B cell (primary cell): ENCODE measurements at regions of chr17 and their contacts with region 1.

Region 1: DNA sequence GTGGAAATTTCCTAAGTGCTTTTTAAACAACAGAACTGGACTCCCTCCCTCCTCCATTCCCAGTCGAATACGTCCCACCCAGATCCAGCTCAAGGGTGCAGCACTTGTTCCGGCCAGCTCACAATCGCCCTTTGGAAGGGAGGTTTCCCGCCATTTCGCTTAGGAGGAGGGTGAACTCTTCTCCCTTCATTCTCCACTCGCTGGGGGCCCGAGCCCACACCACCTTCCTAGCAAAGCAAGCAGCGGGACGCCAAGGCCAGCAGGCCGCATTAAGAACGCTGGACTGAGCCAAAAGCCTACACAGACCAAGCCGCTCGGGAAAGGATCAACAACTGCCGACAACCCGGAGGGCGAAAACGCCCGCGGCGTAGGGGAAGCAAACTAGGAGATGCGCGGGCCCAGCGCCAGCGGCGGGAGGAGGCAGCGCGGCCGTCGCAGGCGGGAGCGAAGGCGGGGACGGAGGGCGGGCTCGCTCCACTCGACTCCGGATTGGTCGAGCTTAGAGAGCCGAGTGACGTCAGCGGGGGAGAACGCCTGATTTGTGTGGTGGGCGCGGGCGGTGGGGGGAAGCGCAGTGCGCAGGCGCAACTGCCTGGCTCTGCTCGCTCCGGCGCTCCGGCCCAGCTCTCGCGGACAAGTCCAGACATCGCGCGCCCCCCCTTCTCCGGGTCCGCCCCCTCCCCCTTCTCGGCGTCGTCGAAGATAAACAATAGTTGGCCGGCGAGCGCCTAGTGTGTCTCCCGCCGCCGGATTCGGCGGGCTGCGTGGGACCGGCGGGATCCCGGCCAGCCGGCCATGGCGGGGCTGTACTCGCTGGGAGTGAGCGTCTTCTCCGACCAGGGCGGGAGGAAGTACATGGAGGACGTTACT is at the start of gene PPM1D:
- DNase-seq: peak; percentile 99
- ATAC-seq: peak; percentile 93
- H3K4me3 ChIP-seq: peak within 1 kb of the TSS; percentile 82 to 98 (median 92)
- H3K4me3 Mint-ChIP-seq: peak within 1 kb of the TSS; percentile 91
- H3K27ac ChIP-seq: peak within 1 kb of the TSS; percentile 92 to 94
- H3K27ac Mint-ChIP-seq: peak within 1 kb of the TSS; percentile 92
- H3K4me1 ChIP-seq: peaks cover 24 to 28% of the 10 kb centered on the region in 2 donors
- H3K4me1 Mint-ChIP-seq: peaks cover 44% of the 10 kb centered on the region
- H3K27me3 ChIP-seq: no peaks in the 10 kb centered on the region
- H3K27me3 Mint-ChIP-seq: no peaks in the 10 kb centered on the region
- CTCF ChIP-seq: no peak
- total RNA-seq, gene PPM1D: 27.2 and 28.6 TPM in 2 replicates

Region 2: GRCh38 chr17:58777396-58777795 is 1822.5 kb before region 1 on chr17:
- CTCF ChIA-PET with region 1: no interaction called
- POLR2A ChIA-PET with region 1: interaction called, 14 read pairs
- intact Hi-C with region 1: no loop called
- DNase-seq: no peak
- ATAC-seq: no peak
- H3K4me3 ChIP-seq: no peak overlapping the region
- H3K4me3 Mint-ChIP-seq: no peak overlapping the region
- H3K27ac ChIP-seq: no peak overlapping the region
- H3K27ac Mint-ChIP-seq: no peak overlapping the region
- H3K4me1 ChIP-seq: no peaks in the 10 kb centered on the region
- H3K4me1 Mint-ChIP-seq: no peaks in the 10 kb centered on the region
- H3K27me3 ChIP-seq: no peaks in the 10 kb centered on the region
- H3K27me3 Mint-ChIP-seq: no peaks in the 10 kb centered on the region
- CTCF ChIP-seq: no peak

Region 3: DNA sequence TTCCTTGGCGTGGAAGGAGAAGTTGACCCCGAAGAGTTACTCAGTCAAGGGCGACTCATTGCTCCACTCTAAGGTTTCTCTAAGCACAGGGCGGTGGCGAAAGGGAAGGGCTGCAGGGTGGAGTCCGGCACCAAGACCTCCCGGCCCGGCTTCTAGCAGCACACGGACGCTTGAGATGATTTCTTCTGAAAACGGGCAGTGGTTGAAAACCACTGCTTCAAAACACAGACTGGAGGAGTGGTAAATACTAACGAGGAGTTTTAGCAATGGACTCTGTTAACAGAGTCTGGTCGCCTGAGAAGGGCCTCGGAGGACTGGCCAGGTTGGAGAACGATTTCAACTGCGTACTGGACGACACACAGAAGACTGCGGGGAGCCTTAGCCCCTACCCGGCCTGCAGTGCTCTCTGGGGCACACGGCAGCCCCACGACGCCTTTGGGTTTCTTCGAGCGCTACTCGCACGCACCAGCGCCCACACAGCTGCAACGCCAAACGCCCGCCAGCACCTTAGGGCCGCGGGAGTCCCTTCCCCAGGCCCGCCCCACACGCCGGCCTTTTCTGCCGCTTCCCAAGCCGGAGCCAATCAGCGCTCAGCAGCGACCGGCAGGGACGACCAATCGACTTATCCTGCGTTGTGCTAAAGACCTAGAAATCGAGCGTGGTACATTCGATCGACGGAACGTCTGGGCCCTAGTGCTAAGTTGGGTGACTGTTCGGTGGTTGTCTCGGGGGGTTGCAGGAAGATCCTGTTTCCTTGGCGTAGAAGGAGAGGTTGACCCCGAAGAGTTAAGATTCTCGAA is 464.5 kb before region 1 on chr17:
- CTCF ChIA-PET with region 1: no interaction called
- POLR2A ChIA-PET with region 1: no interaction called
- intact Hi-C with region 1: loop called (anchors 10 kb)
- DNase-seq: peak; percentile 85
- ATAC-seq: peak; percentile 90
- H3K4me3 ChIP-seq: peak overlapping the region; percentile 59 to 85 (median 72)
- H3K4me3 Mint-ChIP-seq: peak overlapping the region; percentile 92
- H3K27ac ChIP-seq: no peak overlapping the region
- H3K27ac Mint-ChIP-seq: peak overlapping the region; percentile 85
- H3K4me1 ChIP-seq: peaks cover 28 to 36% of the 10 kb centered on the region in 2 donors
- H3K4me1 Mint-ChIP-seq: peaks cover 31% of the 10 kb centered on the region
- H3K27me3 ChIP-seq: peaks cover 0 to 25% (median 14%) of the 10 kb centered on the region in 4 experiments
- H3K27me3 Mint-ChIP-seq: peaks cover 6% of the 10 kb centered on the region
- CTCF ChIP-seq: no peak

Region 4: DNA sequence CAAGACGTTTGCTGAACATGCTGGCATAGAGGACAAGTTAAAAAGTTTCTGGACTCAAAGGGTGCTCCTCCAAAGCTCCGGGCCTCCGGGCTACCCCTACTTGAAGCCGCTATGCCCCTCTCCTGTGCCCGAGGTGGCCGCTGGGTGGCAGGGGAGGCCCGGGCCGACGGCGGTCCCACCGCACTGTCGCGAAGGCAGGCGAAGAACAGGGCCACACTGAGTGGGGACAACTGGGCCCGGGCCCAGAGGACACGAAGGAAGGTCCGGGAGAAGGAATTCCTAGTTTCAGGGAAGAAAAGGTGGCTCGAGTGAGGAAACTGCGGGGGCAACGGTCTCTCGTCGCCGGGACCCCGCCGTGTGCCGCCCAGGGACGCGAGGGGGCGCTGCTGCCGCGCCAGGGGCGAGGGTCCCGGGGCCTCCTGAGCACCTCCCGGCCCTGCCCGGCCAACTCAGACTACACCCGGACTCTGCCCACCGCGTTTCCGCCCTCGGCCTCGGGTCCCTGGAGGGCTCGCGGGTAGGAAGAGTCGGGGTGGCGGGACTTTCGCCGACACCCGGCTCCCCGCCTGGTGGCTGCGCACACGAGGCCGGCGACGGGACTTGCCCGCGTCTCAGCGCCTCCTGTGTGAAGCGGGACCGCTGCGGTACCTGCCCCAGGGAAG is 178.5 kb before region 1 on chr17:
- CTCF ChIA-PET with region 1: interaction called, 3 read pairs
- POLR2A ChIA-PET with region 1: no interaction called
- intact Hi-C with region 1: loop called (anchors 2 kb)
- DNase-seq: peak; percentile 88
- ATAC-seq: peak; percentile 90
- H3K4me3 ChIP-seq: peak overlapping the region; percentile 44 to 71 (median 56)
- H3K4me3 Mint-ChIP-seq: peak overlapping the region; percentile 87
- H3K27ac ChIP-seq: peak overlapping the region; percentile 61 to 76
- H3K27ac Mint-ChIP-seq: peak overlapping the region; percentile 87
- H3K4me1 ChIP-seq: peaks cover 8 to 15% of the 10 kb centered on the region in 2 donors
- H3K4me1 Mint-ChIP-seq: peaks cover 12% of the 10 kb centered on the region
- H3K27me3 ChIP-seq: no peaks in the 10 kb centered on the region
- H3K27me3 Mint-ChIP-seq: no peaks in the 10 kb centered on the region
- CTCF ChIP-seq: peak; percentile 100

Region 5: DNA sequence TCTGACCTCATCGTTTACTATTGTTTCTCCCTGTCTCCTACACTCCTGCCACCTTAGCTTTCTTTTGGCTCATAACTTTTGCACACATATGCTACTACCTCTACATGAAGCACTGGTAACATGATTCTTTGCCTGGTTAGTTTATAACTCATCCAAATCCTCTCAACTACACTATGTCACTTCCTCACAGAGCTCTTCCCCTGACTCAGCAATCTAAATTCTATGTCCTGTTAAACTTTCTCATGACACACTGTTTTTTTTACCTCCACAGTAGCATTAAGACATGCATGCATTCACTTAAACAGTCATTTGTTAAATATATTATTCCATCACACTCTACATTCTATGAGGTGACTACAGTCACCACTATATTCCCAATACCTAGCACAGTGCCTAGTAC is 93.5 kb before region 1 on chr17:
- CTCF ChIA-PET with region 1: no interaction called
- POLR2A ChIA-PET with region 1: no interaction called
- intact Hi-C with region 1: no loop called
- DNase-seq: no peak
- ATAC-seq: no peak
- H3K4me3 ChIP-seq: no peak overlapping the region
- H3K4me3 Mint-ChIP-seq: no peak overlapping the region
- H3K27ac ChIP-seq: no peak overlapping the region
- H3K27ac Mint-ChIP-seq: no peak overlapping the region
- H3K4me1 ChIP-seq: no peaks in the 10 kb centered on the region
- H3K4me1 Mint-ChIP-seq: peaks cover 24% of the 10 kb centered on the region
- H3K27me3 ChIP-seq: no peaks in the 10 kb centered on the region
- H3K27me3 Mint-ChIP-seq: no peaks in the 10 kb centered on the region
- CTCF ChIP-seq: no peak

Region 6: DNA sequence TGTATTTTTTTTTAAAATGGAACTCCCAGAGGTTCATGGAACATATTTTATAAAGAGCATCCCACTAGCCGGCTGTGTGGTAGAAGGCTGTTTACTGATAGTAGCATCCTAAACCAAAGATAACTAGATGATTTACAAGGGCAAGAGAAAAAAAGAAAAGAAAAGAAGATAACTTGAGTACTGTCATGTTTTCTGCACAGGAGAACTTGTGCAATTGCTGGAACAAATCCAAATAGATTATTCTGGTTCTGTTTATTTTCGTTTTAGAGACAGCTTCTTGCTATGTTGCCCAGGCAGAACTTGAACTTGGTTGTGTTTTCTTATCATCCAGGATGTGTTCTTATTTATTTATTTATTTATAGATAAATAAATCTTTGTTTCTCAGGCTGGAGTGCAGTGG is 20.8 kb before region 1 on chr17:
- CTCF ChIA-PET with region 1: no interaction called
- POLR2A ChIA-PET with region 1: no interaction called
- intact Hi-C with region 1: no loop called
- DNase-seq: no peak
- ATAC-seq: no peak
- H3K4me3 ChIP-seq: no peak overlapping the region
- H3K4me3 Mint-ChIP-seq: no peak overlapping the region
- H3K27ac ChIP-seq: no peak overlapping the region
- H3K27ac Mint-ChIP-seq: no peak overlapping the region
- H3K4me1 ChIP-seq: peaks cover 0 to 4% of the 10 kb centered on the region in 2 donors
- H3K4me1 Mint-ChIP-seq: peaks cover 4% of the 10 kb centered on the region
- H3K27me3 ChIP-seq: no peaks in the 10 kb centered on the region
- H3K27me3 Mint-ChIP-seq: peaks cover 10% of the 10 kb centered on the region
- CTCF ChIP-seq: no peak

Region 7: DNA sequence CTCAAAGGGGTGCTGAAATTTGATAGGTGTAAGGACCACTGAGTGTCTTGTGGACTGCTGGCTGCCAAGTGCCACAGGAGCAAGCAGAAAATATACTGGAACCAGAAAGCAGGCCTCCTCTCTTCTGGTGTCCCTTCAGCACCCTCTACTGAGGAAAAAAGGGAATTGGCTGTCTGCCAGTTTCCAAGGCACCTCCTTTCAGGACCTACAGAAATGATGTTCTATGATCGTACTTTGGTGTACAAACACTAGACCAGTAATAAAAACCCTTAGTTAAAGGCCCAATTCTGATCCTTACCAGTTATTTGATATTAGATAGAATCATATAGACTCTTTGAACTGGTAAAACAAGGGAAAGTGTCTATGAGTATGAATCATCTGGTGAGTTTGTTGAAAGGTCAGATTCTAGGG is 42.0 kb after region 1 on chr17:
- CTCF ChIA-PET with region 1: interaction called, 7 read pairs
- POLR2A ChIA-PET with region 1: interaction called, 3 read pairs
- intact Hi-C with region 1: loop called (anchors 2 kb)
- DNase-seq: peak; percentile 59
- ATAC-seq: peak; percentile 36
- H3K4me3 ChIP-seq: no peak overlapping the region
- H3K4me3 Mint-ChIP-seq: no peak overlapping the region
- H3K27ac ChIP-seq: no peak overlapping the region
- H3K27ac Mint-ChIP-seq: no peak overlapping the region
- H3K4me1 ChIP-seq: no peaks in the 10 kb centered on the region
- H3K4me1 Mint-ChIP-seq: peaks cover 2% of the 10 kb centered on the region
- H3K27me3 ChIP-seq: no peaks in the 10 kb centered on the region
- H3K27me3 Mint-ChIP-seq: no peaks in the 10 kb centered on the region
- CTCF ChIP-seq: peak; percentile 27